Activated CD8-positive, alpha-beta T cell treated with anti-CD3 and anti-CD28 coated beads for 36 hours (primary cell): ENCODE measurements at regions of chr16 and their contacts with region 1.

Region 1: DNA sequence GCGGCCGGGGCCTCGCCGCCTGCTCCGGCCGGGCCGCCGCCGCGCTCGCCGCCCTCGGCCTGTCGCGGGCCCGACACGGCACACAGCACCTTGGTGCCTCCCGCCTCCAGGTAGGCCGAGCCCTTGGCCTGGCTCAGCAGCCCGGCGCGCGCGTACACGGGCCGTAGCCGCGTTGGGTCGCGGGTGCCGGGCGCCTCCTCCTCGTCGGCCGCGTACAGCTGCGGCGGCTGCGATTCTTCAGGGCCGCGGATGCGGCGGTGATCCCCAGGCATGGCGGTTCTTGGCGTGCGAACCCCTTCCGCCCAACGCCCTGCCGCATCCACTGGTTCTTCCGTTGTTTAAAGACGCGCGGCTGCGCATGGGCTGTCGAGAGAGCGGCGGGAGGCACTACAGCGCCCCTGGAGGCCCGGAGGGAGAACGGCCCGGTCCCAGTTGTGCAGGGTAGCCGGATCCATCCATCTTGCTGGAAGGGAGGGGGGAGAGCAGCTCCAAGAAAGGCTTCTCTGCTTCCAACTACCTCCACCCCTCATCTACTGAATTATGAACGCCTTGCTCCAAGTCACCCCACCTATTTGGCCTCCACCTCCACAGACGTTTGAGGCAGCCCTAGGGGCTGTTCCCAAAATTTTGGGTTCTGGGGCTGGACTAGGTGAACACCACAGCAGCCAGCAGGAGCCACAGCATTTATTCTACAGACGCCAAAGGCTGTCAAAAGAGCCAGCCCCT is at the start of gene EXOSC6:
- DNase-seq: peak; percentile 96
- ATAC-seq: peak; percentile 97
- H3K4me3 Mint-ChIP-seq: peak within 1 kb of the TSS; percentile 88
- H3K27ac Mint-ChIP-seq: peak within 1 kb of the TSS; percentile 93
- H3K4me1 Mint-ChIP-seq: peaks cover 19% of the 10 kb centered on the region
- H3K27me3 Mint-ChIP-seq: no peaks in the 10 kb centered on the region
- CTCF ChIP-seq: peak; percentile 84
- total RNA-seq, gene EXOSC6: 23.6 to 25.0 TPM

Region 2: DNA sequence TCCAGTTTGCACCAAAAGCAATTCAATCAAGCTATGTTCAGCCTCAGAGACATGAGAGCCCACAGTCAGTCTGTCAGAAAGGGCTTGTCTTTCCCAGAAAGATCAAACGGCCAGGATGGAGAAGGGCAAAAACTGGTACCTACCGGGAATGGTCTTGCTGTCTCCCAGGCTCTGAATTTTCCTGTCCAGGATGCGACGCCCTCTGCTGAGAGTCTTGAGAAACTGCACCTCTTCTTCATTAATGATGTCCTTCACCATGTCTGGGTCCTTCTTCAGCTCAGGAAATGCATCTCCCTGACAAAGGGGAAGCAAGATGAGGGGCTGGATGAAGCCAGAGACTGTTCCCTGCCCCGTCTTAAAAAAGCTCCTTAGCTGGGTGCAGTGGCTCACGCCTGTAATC is 15.7 kb after region 1 on chr16:
- CTCF ChIA-PET with region 1: interaction called, 52 read pairs
- POLR2A ChIA-PET with region 1: interaction called, 28 read pairs
- intact Hi-C with region 1: no loop called
- DNase-seq: no peak
- ATAC-seq: peak; percentile 58
- H3K4me3 Mint-ChIP-seq: no peak overlapping the region
- H3K27ac Mint-ChIP-seq: no peak overlapping the region
- H3K4me1 Mint-ChIP-seq: no peaks in the 10 kb centered on the region
- H3K27me3 Mint-ChIP-seq: no peaks in the 10 kb centered on the region
- CTCF ChIP-seq: peak; percentile 68